Caco-2 (cell line): ENCODE measurements at regions of chr20 and their contacts with region 1.

Region 1: GRCh38 chr20:48295445-48295963 is 510.2 kb upstream of the SULF2 start:
- DNase-seq: peak; percentile 95 to 96
- H3K4me3 ChIP-seq: no peak overlapping the region
- H3K4me3 Mint-ChIP-seq: peak overlapping the region; percentile 53
- H3K27ac Mint-ChIP-seq: peak overlapping the region; percentile 95
- H3K4me1 ChIP-seq: peaks cover 43% of the 10 kb centered on the region
- H3K4me1 Mint-ChIP-seq: peaks cover 66% of the 10 kb centered on the region
- H3K27me3 ChIP-seq: no peaks in the 10 kb centered on the region
- H3K27me3 Mint-ChIP-seq: no peaks in the 10 kb centered on the region
- CTCF ChIP-seq: peak; percentile 73 to 77

Region 2: DNA sequence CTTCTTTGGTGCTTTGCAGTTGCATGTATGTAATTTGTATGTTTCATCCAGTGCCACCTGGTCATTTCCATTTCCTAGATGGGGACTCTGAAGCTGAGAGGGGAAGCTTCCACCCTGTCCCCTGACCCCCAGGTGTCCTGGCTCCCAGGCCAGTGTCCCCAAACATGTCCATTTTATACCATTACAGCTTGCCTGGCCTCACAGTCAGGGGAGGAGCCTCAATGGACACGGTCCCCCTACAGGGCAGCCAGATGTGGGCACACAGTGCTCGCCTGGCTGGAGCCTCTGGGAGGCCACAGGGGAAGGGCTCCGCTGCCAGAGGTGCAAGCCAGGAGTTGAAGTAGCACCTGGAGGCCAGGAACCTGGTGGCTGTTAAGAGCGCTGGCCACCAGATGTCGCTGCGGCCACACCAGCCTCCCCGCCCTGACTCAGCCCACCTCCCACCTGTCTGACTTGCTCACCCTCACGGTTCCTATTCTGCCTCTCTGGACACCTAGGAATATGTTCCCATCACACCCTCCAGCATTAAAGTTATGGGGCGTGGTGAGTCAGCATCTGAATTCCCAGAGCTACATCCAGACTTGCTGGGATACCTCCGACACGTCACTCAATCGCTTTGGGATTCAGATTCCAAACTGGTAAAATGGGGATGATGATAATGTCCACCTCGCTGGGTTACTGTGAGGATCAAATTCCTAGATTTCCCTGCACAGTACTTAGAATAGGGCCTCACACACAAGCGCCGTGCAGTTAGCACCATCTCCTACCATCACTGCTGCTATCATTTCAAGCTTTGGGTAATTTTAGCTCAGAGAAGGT is 617.7 kb before region 1 on chr20:
- CTCF ChIA-PET with region 1: interaction called, 23 read pairs
- POLR2A ChIA-PET with region 1: no interaction called
- intact Hi-C with region 1: loop called (anchors 1 kb)
- DNase-seq: peak; percentile 87 to 93
- H3K4me3 ChIP-seq: no peak overlapping the region
- H3K4me3 Mint-ChIP-seq: no peak overlapping the region
- H3K27ac Mint-ChIP-seq: peak overlapping the region; percentile 31
- H3K4me1 ChIP-seq: peaks cover 27% of the 10 kb centered on the region
- H3K4me1 Mint-ChIP-seq: no peaks in the 10 kb centered on the region
- H3K27me3 ChIP-seq: no peaks in the 10 kb centered on the region
- H3K27me3 Mint-ChIP-seq: no peaks in the 10 kb centered on the region
- CTCF ChIP-seq: peak; percentile 99 to 100

Region 3: DNA sequence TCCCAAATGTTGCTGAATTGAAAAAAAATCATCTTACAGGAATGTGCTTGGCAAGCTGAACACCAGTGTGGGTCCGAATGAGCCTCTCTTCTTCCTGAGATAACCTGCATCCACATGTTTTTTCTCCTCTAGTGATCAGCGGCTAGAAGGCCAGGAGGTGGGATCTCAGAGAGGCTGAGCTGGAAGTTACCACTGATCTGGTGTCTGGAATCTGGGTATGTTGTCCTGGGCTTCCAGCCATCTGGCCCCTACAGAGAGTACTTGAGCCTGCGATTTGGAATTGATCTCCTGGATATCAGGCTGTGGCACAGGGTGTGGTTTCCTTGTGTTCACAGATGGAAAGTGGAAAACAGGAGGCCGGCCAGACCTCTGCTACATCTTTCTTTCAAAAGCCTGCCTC is 546.2 kb before region 1 on chr20:
- CTCF ChIA-PET with region 1: interaction called, 13 read pairs
- POLR2A ChIA-PET with region 1: no interaction called
- intact Hi-C with region 1: no loop called
- DNase-seq: no peak
- H3K4me3 ChIP-seq: no peak overlapping the region
- H3K4me3 Mint-ChIP-seq: no peak overlapping the region
- H3K27ac Mint-ChIP-seq: no peak overlapping the region
- H3K4me1 ChIP-seq: no peaks in the 10 kb centered on the region
- H3K4me1 Mint-ChIP-seq: no peaks in the 10 kb centered on the region
- H3K27me3 ChIP-seq: no peaks in the 10 kb centered on the region
- H3K27me3 Mint-ChIP-seq: no peaks in the 10 kb centered on the region
- CTCF ChIP-seq: no peak

Region 4: GRCh38 chr20:47854163-47854562 is 441.3 kb before region 1 on chr20:
- CTCF ChIA-PET with region 1: interaction called, 22 read pairs
- POLR2A ChIA-PET with region 1: no interaction called
- intact Hi-C with region 1: loop called (anchors 1 kb)
- DNase-seq: no peak
- H3K4me3 ChIP-seq: no peak overlapping the region
- H3K4me3 Mint-ChIP-seq: no peak overlapping the region
- H3K27ac Mint-ChIP-seq: no peak overlapping the region
- H3K4me1 ChIP-seq: peaks cover 13% of the 10 kb centered on the region
- H3K4me1 Mint-ChIP-seq: peaks cover 13% of the 10 kb centered on the region
- H3K27me3 ChIP-seq: no peaks in the 10 kb centered on the region
- H3K27me3 Mint-ChIP-seq: peaks cover 8% of the 10 kb centered on the region
- CTCF ChIP-seq: no peak

Region 5: DNA sequence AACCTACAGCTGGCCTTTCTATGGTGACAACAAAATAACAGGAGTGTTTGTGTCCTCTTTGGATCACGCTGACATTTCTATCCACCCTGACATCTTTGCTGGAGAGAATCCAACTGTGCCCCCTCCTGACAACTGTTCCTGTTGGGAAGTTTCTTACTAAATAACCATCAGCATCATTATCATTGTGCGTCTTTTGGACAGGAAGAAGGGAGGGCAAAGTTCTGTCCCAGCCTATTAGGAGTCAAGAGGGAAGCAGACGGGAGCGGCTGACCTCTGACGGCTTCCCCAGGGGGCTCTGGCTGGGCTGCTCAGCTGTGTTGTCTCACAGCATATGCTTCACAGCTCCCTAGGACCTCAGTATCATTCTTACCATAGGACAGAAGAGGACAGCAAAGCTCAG is 314.3 kb before region 1 on chr20:
- CTCF ChIA-PET with region 1: no interaction called
- POLR2A ChIA-PET with region 1: no interaction called
- intact Hi-C with region 1: loop called (anchors 5 kb)
- DNase-seq: peak in 1 of 2 experiments; percentile 36
- H3K4me3 ChIP-seq: no peak overlapping the region
- H3K4me3 Mint-ChIP-seq: no peak overlapping the region
- H3K27ac Mint-ChIP-seq: no peak overlapping the region
- H3K4me1 ChIP-seq: peaks cover 14% of the 10 kb centered on the region
- H3K4me1 Mint-ChIP-seq: peaks cover 13% of the 10 kb centered on the region
- H3K27me3 ChIP-seq: no peaks in the 10 kb centered on the region
- H3K27me3 Mint-ChIP-seq: no peaks in the 10 kb centered on the region
- CTCF ChIP-seq: no peak

Region 6: DNA sequence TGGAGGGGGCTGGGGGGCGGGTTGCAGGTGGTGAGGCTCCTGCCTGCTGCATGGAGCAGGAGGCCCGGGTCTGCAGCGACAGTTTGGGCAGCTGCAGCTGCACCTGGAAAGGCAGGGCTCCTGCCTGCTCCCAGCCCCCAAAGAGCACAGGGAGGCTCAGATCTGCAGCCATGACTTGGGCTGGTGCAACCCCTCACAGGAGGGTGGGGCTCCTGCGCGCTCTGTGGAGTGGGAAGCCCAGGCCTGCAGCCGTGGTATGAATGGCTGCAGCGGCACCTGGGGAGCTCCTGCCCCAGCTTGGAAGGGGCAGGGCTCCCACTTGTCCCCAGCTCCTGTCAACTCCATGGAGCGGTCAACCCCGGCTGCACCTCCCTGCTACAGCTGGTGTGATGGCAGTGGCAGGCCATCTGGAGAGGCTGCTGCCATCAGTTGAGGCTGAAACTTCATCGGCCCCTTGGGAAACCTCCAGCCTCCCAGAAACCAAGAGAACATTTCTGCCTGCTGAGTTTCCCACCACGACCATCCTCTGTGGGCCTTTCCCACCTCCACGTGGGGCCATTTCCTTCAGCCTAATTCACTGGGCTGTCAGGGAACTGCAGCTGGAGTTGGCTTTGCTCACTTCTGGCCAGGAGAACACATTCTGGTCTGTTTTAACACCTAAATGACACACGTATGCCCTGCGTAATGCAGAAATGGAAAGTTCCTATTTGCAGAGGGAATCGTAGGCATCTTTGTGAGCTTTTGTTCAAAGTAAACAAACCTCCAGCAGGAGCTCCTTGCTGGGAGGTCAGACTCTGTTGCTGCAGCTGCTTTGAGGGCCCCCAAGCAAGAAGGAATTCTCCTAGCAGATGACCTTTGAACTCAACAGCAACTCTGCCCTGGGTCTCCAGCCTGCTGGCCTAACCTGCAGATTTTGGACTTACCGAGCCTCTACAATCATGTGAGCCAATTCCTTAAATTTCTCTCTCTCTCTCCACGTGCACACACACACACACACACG is 103.3 kb after region 1 on chr20:
- CTCF ChIA-PET with region 1: interaction called, 5 read pairs
- POLR2A ChIA-PET with region 1: interaction called, 10 read pairs
- intact Hi-C with region 1: loop called (anchors 1 kb)
- DNase-seq: peak; percentile 91 to 97
- H3K4me3 ChIP-seq: no peak overlapping the region
- H3K4me3 Mint-ChIP-seq: peak overlapping the region; percentile 7
- H3K27ac Mint-ChIP-seq: peak overlapping the region; percentile 91
- H3K4me1 ChIP-seq: peaks cover 54% of the 10 kb centered on the region
- H3K4me1 Mint-ChIP-seq: peaks cover 40% of the 10 kb centered on the region
- H3K27me3 ChIP-seq: no peaks in the 10 kb centered on the region
- H3K27me3 Mint-ChIP-seq: no peaks in the 10 kb centered on the region
- CTCF ChIP-seq: no peak